B cell (primary cell): ENCODE measurements at regions of chr3 and their contacts with region 1.

Region 1: GRCh38 chr3:17290894-17291293 is 406.1 kb downstream of the PLCL2 start:
- DNase-seq: no peak
- ATAC-seq: no peak
- H3K4me3 ChIP-seq: no peak overlapping the region
- H3K4me3 Mint-ChIP-seq: no peak overlapping the region
- H3K27ac ChIP-seq: no peak overlapping the region
- H3K27ac Mint-ChIP-seq: no peak overlapping the region
- H3K4me1 ChIP-seq: no peaks in the 10 kb centered on the region
- H3K4me1 Mint-ChIP-seq: no peaks in the 10 kb centered on the region
- H3K27me3 ChIP-seq: no peaks in the 10 kb centered on the region
- H3K27me3 Mint-ChIP-seq: no peaks in the 10 kb centered on the region
- CTCF ChIP-seq: no peak

Region 2: DNA sequence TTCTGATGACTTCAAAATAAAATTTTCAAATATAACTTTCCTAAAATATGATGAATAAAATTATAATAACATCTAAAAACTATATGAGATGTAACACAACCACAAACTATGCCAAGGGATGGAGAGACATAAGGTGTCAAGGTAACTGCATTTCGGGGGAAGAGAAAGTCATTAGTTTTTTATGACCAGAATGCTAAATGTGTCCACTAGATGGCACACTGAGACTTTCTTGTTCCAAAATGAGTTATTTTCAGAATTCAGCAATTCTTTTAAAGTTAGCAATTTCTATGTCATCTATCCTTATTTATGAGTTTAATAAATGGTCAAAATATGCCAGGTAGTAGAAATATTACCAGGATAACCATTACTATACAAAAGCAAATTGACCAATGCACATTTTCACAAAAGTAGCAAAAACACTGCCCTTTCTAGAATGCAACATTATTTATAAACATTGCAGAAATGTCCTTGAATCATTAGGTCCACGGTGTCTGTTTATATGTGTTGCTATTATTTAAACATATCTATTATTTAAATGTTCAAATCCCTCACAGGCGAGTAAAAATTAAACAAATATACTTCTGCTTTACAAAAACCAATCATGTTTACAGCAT is 32.0 kb before region 1 on chr3:
- CTCF ChIA-PET with region 1: no interaction called
- POLR2A ChIA-PET with region 1: no interaction called
- intact Hi-C with region 1: loop called (anchors 1 kb)
- DNase-seq: peak; percentile 61
- ATAC-seq: no peak
- H3K4me3 ChIP-seq: no peak overlapping the region
- H3K4me3 Mint-ChIP-seq: no peak overlapping the region
- H3K27ac ChIP-seq: no peak overlapping the region
- H3K27ac Mint-ChIP-seq: no peak overlapping the region
- H3K4me1 ChIP-seq: no peaks in the 10 kb centered on the region
- H3K4me1 Mint-ChIP-seq: peaks cover 1% of the 10 kb centered on the region
- H3K27me3 ChIP-seq: no peaks in the 10 kb centered on the region
- H3K27me3 Mint-ChIP-seq: no peaks in the 10 kb centered on the region
- CTCF ChIP-seq: peak; percentile 96

Region 3: DNA sequence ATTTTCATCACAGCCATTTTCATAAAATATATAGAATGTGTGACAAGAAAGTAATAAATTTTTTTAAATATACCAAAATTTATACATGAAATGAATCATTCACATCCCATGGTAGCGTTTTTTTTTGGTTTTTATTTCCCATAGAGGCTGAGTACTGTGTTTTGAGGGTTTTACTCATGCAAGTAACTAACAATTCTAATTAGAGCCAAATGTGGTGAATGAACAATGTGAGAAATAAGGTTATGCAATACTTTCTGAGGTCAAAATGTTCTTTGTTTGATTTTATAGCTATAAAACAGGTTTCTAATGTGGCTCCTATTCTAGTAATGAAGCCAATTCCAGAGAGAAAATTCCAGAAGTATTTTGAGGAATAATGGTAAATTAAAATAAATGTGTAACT is 64.7 kb after region 1 on chr3:
- CTCF ChIA-PET with region 1: interaction called, 3 read pairs
- POLR2A ChIA-PET with region 1: no interaction called
- intact Hi-C with region 1: loop called (anchors 10 kb)
- DNase-seq: no peak
- ATAC-seq: no peak
- H3K4me3 ChIP-seq: no peak overlapping the region
- H3K4me3 Mint-ChIP-seq: no peak overlapping the region
- H3K27ac ChIP-seq: no peak overlapping the region
- H3K27ac Mint-ChIP-seq: no peak overlapping the region
- H3K4me1 ChIP-seq: no peaks in the 10 kb centered on the region
- H3K4me1 Mint-ChIP-seq: no peaks in the 10 kb centered on the region
- H3K27me3 ChIP-seq: no peaks in the 10 kb centered on the region
- H3K27me3 Mint-ChIP-seq: no peaks in the 10 kb centered on the region
- CTCF ChIP-seq: no peak

Region 4: DNA sequence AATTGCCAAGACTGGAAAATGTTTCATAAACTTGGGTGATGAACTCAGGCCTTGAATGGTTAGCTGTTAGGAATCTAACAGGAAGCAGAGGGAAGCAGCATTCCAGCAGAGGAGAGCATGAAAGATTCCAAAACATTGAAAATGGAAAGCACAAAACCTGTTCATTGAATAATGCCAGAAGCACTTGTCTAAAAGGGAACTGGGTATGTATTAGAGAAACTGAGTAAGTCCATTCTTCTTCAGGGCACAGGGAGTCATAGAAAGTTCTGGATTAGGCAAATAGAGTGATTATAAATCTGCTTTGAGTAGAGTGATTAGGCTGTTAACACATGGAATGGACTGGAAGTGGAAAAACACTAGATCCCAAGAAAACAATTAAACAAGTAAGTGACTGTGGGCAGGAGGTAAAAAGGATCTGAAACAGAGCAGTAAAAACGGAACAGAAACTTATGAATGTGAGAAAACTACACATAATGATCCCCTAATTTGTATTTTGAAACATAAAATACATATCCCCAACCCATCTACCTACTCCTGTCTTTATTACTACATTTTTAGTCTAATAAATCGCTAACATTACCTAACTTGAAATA is 108.2 kb after region 1 on chr3:
- CTCF ChIA-PET with region 1: no interaction called
- POLR2A ChIA-PET with region 1: no interaction called
- intact Hi-C with region 1: no loop called
- DNase-seq: peak; percentile 62
- ATAC-seq: peak; percentile 76
- H3K4me3 ChIP-seq: no peak overlapping the region
- H3K4me3 Mint-ChIP-seq: no peak overlapping the region
- H3K27ac ChIP-seq: peak overlapping the region; percentile 39 to 74
- H3K27ac Mint-ChIP-seq: no peak overlapping the region
- H3K4me1 ChIP-seq: peaks cover 26 to 28% of the 10 kb centered on the region in 2 donors
- H3K4me1 Mint-ChIP-seq: peaks cover 35% of the 10 kb centered on the region
- H3K27me3 ChIP-seq: no peaks in the 10 kb centered on the region
- H3K27me3 Mint-ChIP-seq: no peaks in the 10 kb centered on the region
- CTCF ChIP-seq: no peak